ENCODE measurements at regions of chrX and their contacts with region 1.

Region 1: DNA sequence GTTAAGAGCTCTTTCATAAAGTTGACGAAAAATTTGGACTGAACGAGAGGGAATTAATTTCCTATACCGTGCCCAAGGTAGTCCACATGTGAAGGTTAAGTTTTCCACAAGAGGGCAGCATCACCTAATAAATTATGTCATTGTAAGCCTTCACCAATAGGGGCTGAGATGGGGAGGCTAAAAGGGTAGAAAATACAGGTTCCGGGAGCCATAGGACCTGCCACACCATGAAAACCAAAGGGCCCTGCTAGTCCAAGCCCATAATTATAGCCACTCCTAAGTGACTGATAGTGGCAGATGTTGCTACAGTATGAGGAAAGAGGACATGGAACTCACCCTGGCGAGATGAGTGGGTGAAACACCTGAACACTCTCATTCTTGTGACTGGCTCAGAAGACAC is 122.2 kb downstream of the SHROOM4 start:
- DNase-seq: peak; percentile 75
- ATAC-seq: peak; percentile 74
- H3K4me3 ChIP-seq: no peak overlapping the region
- H3K27ac ChIP-seq: no peak overlapping the region
- H3K4me1 ChIP-seq: no peaks in the 10 kb centered on the region
- H3K27me3 ChIP-seq: no peaks in the 10 kb centered on the region
- CTCF ChIP-seq: peak; percentile 70

Region 2: GRCh38 chrX:50707405-50707804 is 15.6 kb after region 1 on chrX:
- CTCF ChIA-PET with region 1: no interaction called
- POLR2A ChIA-PET with region 1: no interaction called
- intact Hi-C with region 1: no loop called
- DNase-seq: peak; percentile 43
- ATAC-seq: no peak
- H3K4me3 ChIP-seq: no peak overlapping the region
- H3K27ac ChIP-seq: no peak overlapping the region
- H3K4me1 ChIP-seq: no peaks in the 10 kb centered on the region
- H3K27me3 ChIP-seq: no peaks in the 10 kb centered on the region
- CTCF ChIP-seq: no peak

Region 3: GRCh38 chrX:50905334-50905733 is 213.5 kb after region 1 on chrX:
- CTCF ChIA-PET with region 1: no interaction called
- POLR2A ChIA-PET with region 1: no interaction called
- intact Hi-C with region 1: loop called (anchors 2 kb)
- DNase-seq: peak; percentile 45
- ATAC-seq: no peak
- H3K4me3 ChIP-seq: no peak overlapping the region
- H3K27ac ChIP-seq: no peak overlapping the region
- H3K4me1 ChIP-seq: no peaks in the 10 kb centered on the region
- H3K27me3 ChIP-seq: no peaks in the 10 kb centered on the region
- CTCF ChIP-seq: peak; percentile 62

Measured in PC-3 (cell line).